K562 (cell line): ENCODE measurements at regions of chr20 and their contacts with region 1.

Region 1: GRCh38 chr20:46607191-46607848 is 43.9 kb downstream of the SLC13A3 start:
- DNase-seq: no peak
- ATAC-seq: no peak
- H3K4me3 ChIP-seq: no peak overlapping the region
- H3K27ac ChIP-seq: no peak overlapping the region
- H3K4me1 ChIP-seq: no peaks in the 10 kb centered on the region; a peak in 1 of 5 replicates
- H3K27me3 ChIP-seq: no peaks in the 10 kb centered on the region
- CTCF ChIP-seq: no peak
- EP300 ChIP-seq: no peak
- POLR2A ChIP-seq: no peak
- RAD21 ChIP-seq: no peak

Region 2: GRCh38 chr20:46568570-46569129 is 38.7 kb before region 1 on chr20:
- CTCF ChIA-PET with region 1: no interaction called
- POLR2A ChIA-PET with region 1: no interaction called
- in situ Hi-C with region 1: no loop called
- intact Hi-C with region 1: no loop called
- DNase-seq: peak in 1 of 4 experiments; percentile 54
- ATAC-seq: peak; percentile 56
- H3K4me3 ChIP-seq: no peak overlapping the region
- H3K27ac ChIP-seq: no peak overlapping the region
- H3K4me1 ChIP-seq: peaks cover 5 to 8% of the 10 kb centered on the region in 2 experiments; a peak in 3 of 5 replicates
- H3K27me3 ChIP-seq: no peaks in the 10 kb centered on the region
- CTCF ChIP-seq: no peak
- EP300 ChIP-seq: no peak
- POLR2A ChIP-seq: no peak
- RAD21 ChIP-seq: no peak

Region 3: GRCh38 chr20:46621492-46621891 is 14.2 kb after region 1 on chr20:
- CTCF ChIA-PET with region 1: no interaction called
- POLR2A ChIA-PET with region 1: interaction called, 12 read pairs
- in situ Hi-C with region 1: no loop called
- intact Hi-C with region 1: no loop called
- DNase-seq: no peak
- ATAC-seq: no peak
- H3K4me3 ChIP-seq: no peak overlapping the region
- H3K27ac ChIP-seq: no peak overlapping the region
- H3K4me1 ChIP-seq: peaks cover 5 to 15% of the 10 kb centered on the region in 2 experiments; a peak in 3 of 5 replicates
- H3K27me3 ChIP-seq: no peaks in the 10 kb centered on the region
- CTCF ChIP-seq: no peak
- EP300 ChIP-seq: no peak
- POLR2A ChIP-seq: no peak
- RAD21 ChIP-seq: no peak